CD8-positive, alpha-beta T cell (primary cell): ENCODE measurements at regions of chr2 and their contacts with region 1.

Region 1: GRCh38 chr2:227848586-227848985 is 22.8 kb upstream of the DAW1 start:
- DNase-seq: peak in 2 of 9 experiments; percentile 39 to 58
- ATAC-seq: peak; percentile 87
- H3K4me3 ChIP-seq: no peak overlapping the region
- H3K4me3 Mint-ChIP-seq: peak overlapping the region; percentile 40
- H3K27ac ChIP-seq: no peak overlapping the region
- H3K27ac Mint-ChIP-seq: peak overlapping the region; percentile 87
- H3K4me1 ChIP-seq: no peaks in the 10 kb centered on the region
- H3K4me1 Mint-ChIP-seq: no peaks in the 10 kb centered on the region
- H3K27me3 ChIP-seq: no peaks in the 10 kb centered on the region
- H3K27me3 Mint-ChIP-seq: peaks cover 3% of the 10 kb centered on the region
- CTCF ChIP-seq: no peak

Region 2: DNA sequence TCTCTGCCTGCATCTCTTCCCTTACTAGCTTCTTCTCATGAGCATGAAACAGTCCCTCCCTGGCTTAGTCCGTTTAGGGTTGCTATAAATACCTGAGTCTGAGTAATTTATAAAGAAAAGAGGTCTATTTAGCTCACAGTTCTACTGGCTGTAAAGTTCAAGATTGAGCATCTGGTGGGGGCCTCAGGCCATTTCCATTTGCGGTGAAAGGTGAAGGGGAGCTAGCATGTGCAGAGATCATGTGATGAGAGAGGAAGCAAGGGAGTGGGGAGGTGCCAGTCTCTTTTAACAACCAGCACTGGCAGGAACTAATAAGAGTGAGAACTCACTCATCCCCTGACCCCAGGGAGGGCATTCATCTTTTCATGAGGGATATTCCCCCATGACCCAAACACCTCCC is 986.0 kb before region 1 on chr2:
- CTCF ChIA-PET with region 1: no interaction called
- POLR2A ChIA-PET with region 1: no interaction called
- intact Hi-C with region 1: loop called in 1 of 2 experiments (anchors 5 kb)
- DNase-seq: no peak
- ATAC-seq: no peak
- H3K4me3 ChIP-seq: no peak overlapping the region
- H3K4me3 Mint-ChIP-seq: no peak overlapping the region
- H3K27ac ChIP-seq: no peak overlapping the region
- H3K27ac Mint-ChIP-seq: no peak overlapping the region
- H3K4me1 ChIP-seq: no peaks in the 10 kb centered on the region
- H3K4me1 Mint-ChIP-seq: peaks cover 29% of the 10 kb centered on the region
- H3K27me3 ChIP-seq: no peaks in the 10 kb centered on the region
- H3K27me3 Mint-ChIP-seq: no peaks in the 10 kb centered on the region
- CTCF ChIP-seq: no peak

Region 3: GRCh38 chr2:227198866-227199265 is 649.7 kb before region 1 on chr2:
- CTCF ChIA-PET with region 1: no interaction called
- POLR2A ChIA-PET with region 1: no interaction called
- intact Hi-C with region 1: no loop called
- DNase-seq: no peak
- ATAC-seq: no peak
- H3K4me3 ChIP-seq: no peak overlapping the region
- H3K4me3 Mint-ChIP-seq: no peak overlapping the region
- H3K27ac ChIP-seq: no peak overlapping the region
- H3K27ac Mint-ChIP-seq: no peak overlapping the region
- H3K4me1 ChIP-seq: no peaks in the 10 kb centered on the region
- H3K4me1 Mint-ChIP-seq: no peaks in the 10 kb centered on the region
- H3K27me3 ChIP-seq: no peaks in the 10 kb centered on the region
- H3K27me3 Mint-ChIP-seq: peaks cover 3% of the 10 kb centered on the region
- CTCF ChIP-seq: no peak

Region 4: GRCh38 chr2:227324995-227325838 is 523.4 kb before region 1 on chr2 and contains the start of gene MFF:
- CTCF ChIA-PET with region 1: no interaction called
- POLR2A ChIA-PET with region 1: no interaction called
- intact Hi-C with region 1: no loop called
- DNase-seq: peak; percentile 86 to 98 (median 93)
- ATAC-seq: peak; percentile 96
- H3K4me3 ChIP-seq: peak within 1 kb of the TSS; percentile 75 to 81
- H3K4me3 Mint-ChIP-seq: peak within 1 kb of the TSS; percentile 95
- H3K27ac ChIP-seq: peak within 1 kb of the TSS; percentile 59 to 80
- H3K27ac Mint-ChIP-seq: peak within 1 kb of the TSS; percentile 91
- H3K4me1 ChIP-seq: peaks cover 25% of the 10 kb centered on the region
- H3K4me1 Mint-ChIP-seq: peaks cover 56% of the 10 kb centered on the region
- H3K27me3 ChIP-seq: no peaks in the 10 kb centered on the region
- H3K27me3 Mint-ChIP-seq: no peaks in the 10 kb centered on the region
- CTCF ChIP-seq: no peak
- total RNA-seq, gene MFF: 48.6 to 50.3 TPM

Region 5: DNA sequence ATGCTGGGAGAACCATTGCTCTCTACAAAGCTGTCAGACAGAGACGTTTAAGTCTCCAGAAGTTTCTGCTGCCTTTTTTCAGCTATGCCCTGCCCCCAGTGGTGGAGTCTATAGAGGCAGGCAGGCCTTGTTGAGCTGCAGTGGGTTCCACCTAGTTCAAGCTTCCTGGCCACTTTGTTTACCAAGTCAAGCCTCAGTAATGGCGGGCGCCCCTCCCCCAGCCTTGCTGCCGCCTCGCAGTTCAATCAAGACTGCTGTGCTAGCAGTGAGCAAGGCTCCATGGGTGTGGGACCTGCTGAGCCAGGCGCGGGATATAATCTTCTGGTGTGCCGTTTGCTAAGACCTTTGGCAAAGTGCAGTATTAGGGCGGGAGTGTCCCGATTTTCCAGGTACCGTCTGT is 302.6 kb before region 1 on chr2:
- CTCF ChIA-PET with region 1: no interaction called
- POLR2A ChIA-PET with region 1: no interaction called
- intact Hi-C with region 1: no loop called
- DNase-seq: peak in 3 of 9 experiments; percentile 7 to 31 (median 13)
- ATAC-seq: no peak
- H3K4me3 ChIP-seq: no peak overlapping the region
- H3K4me3 Mint-ChIP-seq: no peak overlapping the region
- H3K27ac ChIP-seq: no peak overlapping the region
- H3K27ac Mint-ChIP-seq: no peak overlapping the region
- H3K4me1 ChIP-seq: no peaks in the 10 kb centered on the region
- H3K4me1 Mint-ChIP-seq: peaks cover 3% of the 10 kb centered on the region
- H3K27me3 ChIP-seq: no peaks in the 10 kb centered on the region
- H3K27me3 Mint-ChIP-seq: no peaks in the 10 kb centered on the region
- CTCF ChIP-seq: no peak

Region 6: GRCh38 chr2:227783404-227784138 is 65.0 kb before region 1 on chr2:
- CTCF ChIA-PET with region 1: no interaction called
- POLR2A ChIA-PET with region 1: no interaction called
- intact Hi-C with region 1: loop called in 1 of 2 experiments (anchors 1 kb)
- DNase-seq: peak in 2 of 9 experiments; percentile 44 to 51
- ATAC-seq: peak; percentile 54
- H3K4me3 ChIP-seq: no peak overlapping the region
- H3K4me3 Mint-ChIP-seq: peak overlapping the region; percentile 69
- H3K27ac ChIP-seq: no peak overlapping the region
- H3K27ac Mint-ChIP-seq: peak overlapping the region; percentile 78
- H3K4me1 ChIP-seq: no peaks in the 10 kb centered on the region
- H3K4me1 Mint-ChIP-seq: peaks cover 10% of the 10 kb centered on the region
- H3K27me3 ChIP-seq: no peaks in the 10 kb centered on the region
- H3K27me3 Mint-ChIP-seq: peaks cover 6% of the 10 kb centered on the region
- CTCF ChIP-seq: no peak

Region 7: GRCh38 chr2:227826019-227826521 is 22.5 kb before region 1 on chr2:
- CTCF ChIA-PET with region 1: no interaction called
- POLR2A ChIA-PET with region 1: no interaction called
- intact Hi-C with region 1: no loop called
- DNase-seq: peak in 3 of 9 experiments; percentile 8 to 36 (median 34)
- ATAC-seq: peak; percentile 71
- H3K4me3 ChIP-seq: no peak overlapping the region
- H3K4me3 Mint-ChIP-seq: no peak overlapping the region
- H3K27ac ChIP-seq: no peak overlapping the region
- H3K27ac Mint-ChIP-seq: no peak overlapping the region
- H3K4me1 ChIP-seq: no peaks in the 10 kb centered on the region
- H3K4me1 Mint-ChIP-seq: no peaks in the 10 kb centered on the region
- H3K27me3 ChIP-seq: no peaks in the 10 kb centered on the region
- H3K27me3 Mint-ChIP-seq: peaks cover 8% of the 10 kb centered on the region
- CTCF ChIP-seq: no peak